ENCODE measurements at regions of chr19 and their contacts with region 1.

Region 1: GRCh38 chr19:19606021-19606420 is 12.5 kb downstream of the PBX4 start:
- DNase-seq: peak in 7 of 10 donors; percentile 37 to 73 (median 45)
- ATAC-seq: peak; percentile 73 to 85
- H3K4me3 Mint-ChIP-seq: peak overlapping the region in 8 of 10 donors; percentile 33 to 79 (median 62)
- H3K27ac Mint-ChIP-seq: peak overlapping the region; percentile 81 to 96 (median 92)
- H3K4me1 Mint-ChIP-seq: peaks cover 30 to 66% (median 50%) of the 10 kb centered on the region in 4 donors
- H3K27me3 Mint-ChIP-seq: no peaks in the 10 kb centered on the region

Region 2: DNA sequence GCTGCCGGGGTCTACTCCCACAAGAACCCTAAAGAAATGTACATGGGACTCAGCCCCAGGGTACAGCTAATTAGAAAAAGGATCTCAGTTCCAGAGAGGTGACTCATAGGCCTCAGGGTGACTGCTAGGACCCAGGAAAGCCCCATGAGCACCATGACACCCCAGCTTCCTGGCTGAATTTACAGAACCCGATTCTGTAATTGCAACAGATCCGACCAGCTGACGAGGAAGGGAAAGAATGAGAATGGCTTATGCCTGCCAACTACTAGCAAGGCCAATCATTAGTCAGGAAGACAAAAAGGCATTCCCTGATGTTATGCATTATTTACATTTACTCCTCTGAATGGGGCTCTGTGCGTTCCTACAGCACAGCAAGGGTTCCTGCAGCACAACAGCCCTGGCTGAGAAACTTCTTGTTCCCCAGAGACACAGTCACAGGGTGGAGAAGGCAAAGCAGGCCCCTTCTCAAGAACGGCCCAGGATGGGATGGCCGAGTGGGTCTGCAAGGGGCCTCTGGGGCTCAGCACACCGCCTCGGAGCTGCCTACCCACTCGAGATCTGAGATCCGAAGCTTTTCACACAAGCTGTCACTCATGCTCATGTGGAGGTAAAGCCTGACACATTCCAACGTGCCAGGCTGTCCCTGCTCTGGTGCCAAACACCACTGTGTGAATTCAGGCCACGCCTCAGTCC is 14.7 kb before region 1 on chr19:
- POLR2A ChIA-PET with region 1: interaction called, 39 read pairs
- DNase-seq: peak in 4 of 10 donors; percentile 26 to 71 (median 28)
- ATAC-seq: peak; percentile 77 to 78
- H3K4me3 Mint-ChIP-seq: peak overlapping the region in 5 of 10 donors; percentile 26 to 67 (median 39)
- H3K27ac Mint-ChIP-seq: peak overlapping the region; percentile 47 to 90 (median 82)
- H3K4me1 Mint-ChIP-seq: peaks cover 19 to 55% (median 43%) of the 10 kb centered on the region in 4 donors
- H3K27me3 Mint-ChIP-seq: no peaks in the 10 kb centered on the region

Region 3: DNA sequence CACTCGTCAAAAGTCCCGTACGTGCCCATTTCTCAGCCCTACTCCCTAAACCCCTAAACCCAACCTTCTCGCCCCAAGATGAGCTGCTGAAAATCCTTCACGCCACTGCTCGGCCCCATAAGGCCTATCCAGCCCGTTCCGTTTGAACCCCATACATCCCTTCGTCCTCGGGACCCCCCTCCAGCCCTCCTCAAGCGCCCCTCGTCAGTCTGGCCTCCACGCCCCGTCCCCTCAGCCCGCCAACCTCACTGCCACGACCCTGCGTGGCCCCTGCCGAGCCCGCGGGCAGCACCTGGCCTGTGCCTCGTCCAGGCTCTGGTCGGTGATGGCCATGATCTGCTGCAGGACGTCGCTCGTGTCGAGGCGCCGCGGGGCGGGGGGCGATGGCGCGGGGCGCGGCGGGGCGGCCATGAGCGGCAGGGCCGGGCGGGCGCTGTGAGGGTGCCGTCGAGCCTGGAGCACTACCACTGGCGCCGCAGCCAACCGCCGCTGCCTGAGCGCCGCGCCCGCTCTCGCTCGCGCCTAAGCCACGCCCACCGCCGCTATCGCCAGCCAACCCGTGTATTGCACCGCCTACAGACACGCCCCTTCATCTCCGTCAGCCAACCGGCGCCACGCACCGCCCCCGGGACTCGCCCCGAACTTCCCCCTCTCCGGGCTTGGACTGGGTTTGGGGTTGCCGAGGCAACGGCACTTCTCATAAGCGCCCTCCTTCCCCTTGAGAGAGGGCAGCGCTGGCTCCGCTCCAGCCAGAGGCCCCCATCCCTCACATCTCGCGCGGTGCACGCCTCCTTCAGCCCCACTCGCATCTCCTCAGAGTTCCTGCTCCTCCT is 12.4 kb after region 1 on chr19 and contains the start of gene PBX4:
- POLR2A ChIA-PET with region 1: interaction called, 23 read pairs
- DNase-seq: peak; percentile 96 to 100 (median 99)
- ATAC-seq: peak; percentile 92 to 93
- H3K4me3 Mint-ChIP-seq: peak within 1 kb of the TSS; percentile 72 to 97 (median 93)
- H3K27ac Mint-ChIP-seq: peak within 1 kb of the TSS; percentile 81 to 100 (median 97)
- H3K4me1 Mint-ChIP-seq: peaks cover 25 to 57% (median 49%) of the 10 kb centered on the region in 4 donors
- H3K27me3 Mint-ChIP-seq: no peaks in the 10 kb centered on the region
- polyA plus RNA-seq, gene PBX4: 2.6 to 6.9 (median 4.2) TPM

Region 4: GRCh38 chr19:19686580-19686979 is 80.6 kb after region 1 on chr19:
- POLR2A ChIA-PET with region 1: no interaction called
- DNase-seq: no peak
- ATAC-seq: peak in 1 of 2 donors; percentile 37
- H3K4me3 Mint-ChIP-seq: peak overlapping the region in 1 of 10 donors; percentile 1
- H3K27ac Mint-ChIP-seq: peak overlapping the region in 3 of 10 donors; percentile 17 to 75 (median 19)
- H3K4me1 Mint-ChIP-seq: peaks cover 0 to 3% (median under 1%) of the 10 kb centered on the region in 4 donors
- H3K27me3 Mint-ChIP-seq: no peaks in the 10 kb centered on the region

Region 5: GRCh38 chr19:19823916-19824315 is 217.9 kb after region 1 on chr19:
- POLR2A ChIA-PET with region 1: no interaction called
- DNase-seq: no peak
- ATAC-seq: no peak
- H3K4me3 Mint-ChIP-seq: peak overlapping the region in 1 of 10 donors; percentile 7
- H3K27ac Mint-ChIP-seq: peak overlapping the region in 2 of 10 donors; percentile 24 to 48
- H3K4me1 Mint-ChIP-seq: peaks cover 3 to 29% (median 22%) of the 10 kb centered on the region in 4 donors
- H3K27me3 Mint-ChIP-seq: no peaks in the 10 kb centered on the region